ENCODE measurements at regions of chr11 and their contacts with region 1.

Region 1: DNA sequence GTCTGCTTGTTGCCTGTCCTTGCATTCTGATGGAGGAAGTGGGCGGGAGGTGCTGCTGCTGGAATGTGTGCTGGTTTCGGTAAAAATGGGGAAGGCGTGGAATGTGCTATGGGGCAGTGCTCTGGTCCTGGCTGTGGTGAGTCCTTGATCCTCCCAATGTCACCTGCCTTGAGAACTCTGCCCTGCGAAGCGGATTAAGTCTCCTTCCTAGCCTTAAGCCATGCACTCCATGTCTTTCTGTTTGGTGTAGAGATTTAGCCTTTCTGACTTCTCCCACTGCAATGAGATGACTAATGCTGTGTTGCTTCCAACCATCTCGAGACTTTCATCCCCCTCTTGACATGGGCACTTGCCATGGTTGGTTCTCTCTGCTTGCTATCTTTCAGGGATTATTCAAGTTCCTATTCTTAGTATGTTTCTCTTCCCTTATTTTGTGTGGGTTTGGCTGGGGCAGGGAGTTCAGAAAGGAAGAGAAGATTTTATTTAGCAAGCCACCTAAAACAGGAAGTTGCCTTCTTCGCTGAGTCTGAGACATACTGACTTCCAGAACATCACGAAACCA is 687.9 kb downstream of the NTM start:
- H3K4me3 Mint-ChIP-seq: no peak overlapping the region
- H3K27ac Mint-ChIP-seq: no peak overlapping the region
- H3K4me1 Mint-ChIP-seq: peaks cover 12% of the 10 kb centered on the region
- H3K27me3 Mint-ChIP-seq: no peaks in the 10 kb centered on the region

Region 2: DNA sequence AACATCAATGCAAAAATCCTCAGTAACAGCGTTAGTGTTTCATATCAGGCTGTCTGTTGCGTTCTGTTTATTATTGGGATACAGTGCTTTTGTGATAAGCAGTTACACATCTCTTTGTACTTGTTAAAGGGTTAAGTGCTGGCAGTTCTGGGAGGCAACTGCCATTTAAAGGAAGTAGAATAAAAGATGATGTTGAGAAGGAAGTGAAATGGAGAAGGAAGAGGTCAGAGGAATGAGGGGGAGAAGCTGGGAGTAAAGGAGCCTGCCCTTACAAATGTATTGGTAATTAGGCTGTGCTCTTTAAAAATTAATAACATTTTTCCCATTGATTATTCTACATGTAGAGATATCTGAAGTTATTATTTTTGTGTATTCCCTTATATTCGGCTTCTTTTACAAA is 13.2 kb before region 1 on chr11:
- intact Hi-C with region 1: loop called (anchors 2 kb)
- H3K4me3 Mint-ChIP-seq: no peak overlapping the region
- H3K27ac Mint-ChIP-seq: peak overlapping the region; percentile 23
- H3K4me1 Mint-ChIP-seq: peaks cover 78% of the 10 kb centered on the region
- H3K27me3 Mint-ChIP-seq: no peaks in the 10 kb centered on the region

Region 3: GRCh38 chr11:132099692-132100091 is 41.4 kb after region 1 on chr11:
- intact Hi-C with region 1: loop called (anchors 5 kb)
- H3K4me3 Mint-ChIP-seq: no peak overlapping the region
- H3K27ac Mint-ChIP-seq: no peak overlapping the region
- H3K4me1 Mint-ChIP-seq: peaks cover 13% of the 10 kb centered on the region
- H3K27me3 Mint-ChIP-seq: peaks cover 4% of the 10 kb centered on the region

Region 4: GRCh38 chr11:132158093-132158492 is 99.8 kb after region 1 on chr11:
- intact Hi-C with region 1: no loop called
- H3K4me3 Mint-ChIP-seq: no peak overlapping the region
- H3K27ac Mint-ChIP-seq: no peak overlapping the region
- H3K4me1 Mint-ChIP-seq: no peaks in the 10 kb centered on the region
- H3K27me3 Mint-ChIP-seq: peaks cover 8% of the 10 kb centered on the region

Region 5: DNA sequence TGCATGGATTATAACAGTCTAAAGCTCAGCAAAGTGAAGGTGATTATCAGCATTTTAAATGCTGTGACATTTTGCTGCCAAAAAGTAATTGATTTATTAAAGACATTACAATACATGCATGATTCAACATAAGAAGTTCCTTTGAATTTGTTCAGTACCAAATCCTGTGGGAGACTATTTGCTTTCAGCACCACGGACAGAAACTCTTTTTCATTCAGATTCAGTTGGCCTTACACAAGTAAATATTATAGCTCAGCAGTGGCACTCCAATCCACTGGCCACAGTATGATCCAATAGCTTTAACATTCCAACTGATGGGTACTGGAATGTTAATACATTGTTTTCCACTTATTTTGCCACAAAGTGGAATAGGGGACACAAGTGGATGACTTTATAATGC is 118.8 kb after region 1 on chr11:
- intact Hi-C with region 1: no loop called
- H3K4me3 Mint-ChIP-seq: no peak overlapping the region
- H3K27ac Mint-ChIP-seq: no peak overlapping the region
- H3K4me1 Mint-ChIP-seq: no peaks in the 10 kb centered on the region
- H3K27me3 Mint-ChIP-seq: no peaks in the 10 kb centered on the region

Measured in dendritic cell treated with granulocyte-macrophage colony-stimulating factor and Interleukin-4, amounts not matched to agents 40 ng/mL and 50 ng/mL, for 4 days (primary cell).